MCF 10A (cell line): ENCODE measurements at regions of chr10 and their contacts with region 1.

Region 1: GRCh38 chr10:77965294-77965693 is 38.7 kb upstream of the DLG5 start:
- DNase-seq: peak; percentile 76
- H3K4me3 Mint-ChIP-seq: no peak overlapping the region
- H3K27ac Mint-ChIP-seq: no peak overlapping the region
- H3K4me1 Mint-ChIP-seq: peaks cover 5% of the 10 kb centered on the region
- H3K27me3 Mint-ChIP-seq: no peaks in the 10 kb centered on the region
- CTCF ChIP-seq: no peak

Region 2: GRCh38 chr10:77955136-77955535 is 10.2 kb before region 1 on chr10:
- CTCF ChIA-PET with region 1: interaction called, 4 read pairs
- POLR2A ChIA-PET with region 1: interaction called, 10 read pairs
- intact Hi-C with region 1: no loop called
- DNase-seq: no peak
- H3K4me3 Mint-ChIP-seq: no peak overlapping the region
- H3K27ac Mint-ChIP-seq: no peak overlapping the region
- H3K4me1 Mint-ChIP-seq: no peaks in the 10 kb centered on the region
- H3K27me3 Mint-ChIP-seq: no peaks in the 10 kb centered on the region
- CTCF ChIP-seq: no peak

Region 3: DNA sequence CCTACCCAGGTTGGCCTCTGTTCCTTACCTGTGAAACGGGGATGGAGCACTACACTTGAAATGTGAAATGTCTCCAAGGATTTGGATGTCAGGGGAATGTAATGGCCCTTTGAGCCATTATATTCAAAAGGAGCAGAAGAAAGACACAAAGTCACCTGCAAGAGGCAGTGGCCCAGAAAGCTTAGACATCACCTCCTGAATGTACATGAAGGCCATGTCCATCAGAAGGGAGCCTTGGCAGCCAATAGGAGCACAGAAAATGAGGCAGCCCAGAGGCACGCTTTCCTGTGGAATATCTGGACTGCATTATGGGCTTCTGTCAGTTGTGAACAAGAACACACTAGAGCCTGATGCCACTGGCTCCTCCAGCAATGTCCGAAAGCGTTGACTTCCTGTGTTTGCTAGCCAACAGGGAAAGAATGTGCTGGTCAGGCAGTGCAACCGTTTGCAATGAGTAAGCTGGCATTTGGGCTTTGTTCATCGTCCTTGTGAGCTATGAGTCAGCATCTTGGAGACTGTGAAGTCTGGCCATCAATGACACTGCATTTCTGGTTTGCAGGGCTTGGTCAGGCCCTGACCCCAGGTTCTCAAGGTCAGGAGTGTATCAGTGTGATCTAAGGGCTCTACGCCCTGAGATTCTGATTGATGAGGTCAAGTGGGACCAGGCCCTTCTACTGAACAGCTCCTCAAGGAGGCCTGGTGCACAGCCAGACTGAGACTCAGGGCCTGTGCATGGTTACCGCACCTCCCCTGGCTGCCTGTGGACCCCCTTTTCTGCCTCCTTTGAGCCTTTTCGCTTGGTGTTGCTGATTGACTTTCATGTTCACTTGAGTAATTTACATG is 290.7 kb after region 1 on chr10:
- CTCF ChIA-PET with region 1: no interaction called
- POLR2A ChIA-PET with region 1: no interaction called
- intact Hi-C with region 1: no loop called
- DNase-seq: peak; percentile 91
- H3K4me3 Mint-ChIP-seq: no peak overlapping the region
- H3K27ac Mint-ChIP-seq: peak overlapping the region; percentile 20
- H3K4me1 Mint-ChIP-seq: peaks cover 7% of the 10 kb centered on the region
- H3K27me3 Mint-ChIP-seq: no peaks in the 10 kb centered on the region
- CTCF ChIP-seq: no peak